ENCODE measurements at regions of chr15 and their contacts with region 1.

Region 1: GRCh38 chr15:59329091-59329490 is 43.6 kb downstream of the MYO1E start:
- DNase-seq: no peak
- ATAC-seq: no peak
- H3K4me3 ChIP-seq: no peak overlapping the region
- H3K27ac ChIP-seq: no peak overlapping the region
- H3K4me1 ChIP-seq: peaks cover 35% of the 10 kb centered on the region
- H3K27me3 ChIP-seq: no peaks in the 10 kb centered on the region
- CTCF ChIP-seq: no peak

Region 2: GRCh38 chr15:59296181-59296617 is 32.9 kb before region 1 on chr15:
- CTCF ChIA-PET with region 1: no interaction called
- POLR2A ChIA-PET with region 1: interaction called, 20 read pairs
- in situ Hi-C with region 1: no loop called
- intact Hi-C with region 1: no loop called
- DNase-seq: no peak
- ATAC-seq: peak; percentile 33
- H3K4me3 ChIP-seq: peak overlapping the region in 1 of 2 experiments; percentile 17; a peak in 1 of 4 replicates
- H3K27ac ChIP-seq: peak overlapping the region; percentile 92
- H3K4me1 ChIP-seq: peaks cover 86% of the 10 kb centered on the region
- H3K27me3 ChIP-seq: no peaks in the 10 kb centered on the region
- CTCF ChIP-seq: no peak

Region 3: DNA sequence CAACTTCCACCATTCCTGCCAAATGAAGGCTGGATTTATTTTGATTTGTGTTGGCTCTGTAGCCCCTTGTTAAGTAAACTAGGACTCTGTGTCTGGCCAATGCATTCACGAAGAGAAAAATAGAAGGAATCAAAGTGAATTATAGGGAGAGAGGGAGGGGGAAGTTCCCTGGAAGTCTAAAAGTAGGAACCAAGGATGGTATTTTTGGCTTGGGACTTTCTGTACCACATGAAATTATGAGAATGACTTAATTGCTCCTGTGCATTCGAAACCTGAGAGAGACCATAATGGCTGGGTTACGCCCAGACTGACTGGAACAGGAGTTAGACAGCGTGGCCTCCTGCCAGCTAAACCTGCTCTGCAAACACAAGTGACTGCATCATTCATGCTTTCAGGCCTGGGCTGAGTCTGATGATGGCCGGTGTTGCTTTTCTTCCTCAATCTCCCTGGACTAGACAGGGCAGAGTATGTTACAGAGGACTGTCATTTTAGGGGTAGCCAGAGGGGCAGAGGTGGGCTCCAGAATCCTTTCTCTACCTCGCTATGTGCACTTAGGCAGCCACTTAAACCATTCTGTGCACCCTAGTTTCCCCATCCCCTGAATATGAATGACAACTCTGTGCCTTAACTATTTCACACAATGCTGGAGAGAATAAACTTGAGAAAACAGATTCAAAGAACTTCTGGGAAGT is 15.3 kb before region 1 on chr15:
- CTCF ChIA-PET with region 1: no interaction called
- POLR2A ChIA-PET with region 1: no interaction called
- in situ Hi-C with region 1: no loop called
- intact Hi-C with region 1: no loop called
- DNase-seq: no peak
- ATAC-seq: peak; percentile 53; the same call in 1 of the 2 replicates
- H3K4me3 ChIP-seq: no peak overlapping the region
- H3K27ac ChIP-seq: peak overlapping the region; percentile 79; the same call in 1 of the 2 replicates
- H3K4me1 ChIP-seq: peaks cover 56% of the 10 kb centered on the region
- H3K27me3 ChIP-seq: no peaks in the 10 kb centered on the region
- CTCF ChIP-seq: no peak

Measured in Panc1 (cell line).